ENCODE measurements at regions of chr4 and their contacts with region 1.

Region 1: GRCh38 chr4:184168406-184169019 is 49.2 kb downstream of the ENPP6 start:
- DNase-seq: peak; percentile 69

Region 2: GRCh38 chr4:183840311-183840710 is 328.2 kb before region 1 on chr4:
- in situ Hi-C with region 1: loop called (anchors 25 kb)
- DNase-seq: peak; percentile 86

Region 3: DNA sequence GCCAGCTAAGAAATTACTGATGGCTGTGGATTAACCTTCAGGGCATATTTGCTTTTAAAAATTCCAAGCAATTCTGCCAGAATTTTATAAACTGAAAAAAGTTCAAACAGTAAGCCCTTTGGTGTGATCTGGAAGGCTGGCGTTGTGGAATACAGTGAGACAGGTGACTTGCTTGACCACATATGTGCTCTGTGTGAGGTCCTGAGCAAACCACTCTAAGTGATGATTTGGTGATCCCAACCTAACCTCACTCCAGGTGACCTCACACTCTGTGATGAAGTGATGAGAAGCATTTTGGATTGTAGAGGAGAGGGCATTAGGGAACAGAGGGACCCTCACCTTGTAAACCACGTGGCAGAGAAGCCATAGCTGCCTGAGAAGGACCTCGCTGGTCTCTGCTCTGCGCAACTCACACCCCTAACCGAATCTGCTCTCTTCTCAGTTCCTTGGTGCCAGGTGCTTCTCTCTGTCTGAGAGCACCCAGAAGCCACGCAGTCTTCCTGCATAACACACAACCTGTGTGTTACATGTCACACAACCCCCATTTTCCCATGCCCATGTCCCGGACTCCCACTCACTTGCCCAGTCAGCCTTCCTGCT is 57.2 kb before region 1 on chr4:
- in situ Hi-C with region 1: no loop called
- DNase-seq: no peak

Region 4: GRCh38 chr4:184122631-184123408 is 45.7 kb before region 1 on chr4:
- in situ Hi-C with region 1: no loop called
- DNase-seq: peak; percentile 41

Region 5: DNA sequence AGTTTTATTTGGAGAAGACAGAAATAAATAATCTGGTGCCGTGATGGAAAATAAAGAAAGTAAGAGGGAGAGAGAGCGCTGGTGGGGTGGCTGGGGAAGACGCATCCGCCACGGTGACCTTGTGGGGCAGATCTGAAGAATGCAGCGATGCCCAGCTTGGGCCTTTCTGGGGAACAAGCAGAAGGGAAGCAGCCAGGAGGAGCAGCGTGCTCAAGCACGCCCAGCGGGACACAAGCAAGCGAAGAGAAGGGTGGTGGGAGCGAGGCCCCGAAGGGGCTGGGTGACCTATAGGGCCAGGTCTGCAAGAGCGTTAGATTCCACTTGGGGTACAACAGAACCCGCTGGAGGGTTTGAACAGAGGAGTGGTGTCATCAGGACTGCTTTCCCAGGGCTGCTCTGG is 36.7 kb after region 1 on chr4:
- in situ Hi-C with region 1: no loop called
- DNase-seq: no peak